Psoas muscle (tissue), 8 donors: ENCODE measurements at regions of chr13 and their contacts with region 1.

Region 1: GRCh38 chr13:48595431-48596429 is 58.0 kb upstream of the CYSLTR2 start:
- DNase-seq: peak in 1 of 2 donors; percentile 21
- ATAC-seq: peak in 2 of 4 donors; percentile 59 to 62
- H3K4me3 ChIP-seq: no peak overlapping the region
- H3K27ac ChIP-seq: no peak overlapping the region
- H3K4me1 ChIP-seq: no peaks in the 10 kb centered on the region
- H3K27me3 ChIP-seq: no peaks in the 10 kb centered on the region
- CTCF ChIP-seq: peak; percentile 37

Region 2: DNA sequence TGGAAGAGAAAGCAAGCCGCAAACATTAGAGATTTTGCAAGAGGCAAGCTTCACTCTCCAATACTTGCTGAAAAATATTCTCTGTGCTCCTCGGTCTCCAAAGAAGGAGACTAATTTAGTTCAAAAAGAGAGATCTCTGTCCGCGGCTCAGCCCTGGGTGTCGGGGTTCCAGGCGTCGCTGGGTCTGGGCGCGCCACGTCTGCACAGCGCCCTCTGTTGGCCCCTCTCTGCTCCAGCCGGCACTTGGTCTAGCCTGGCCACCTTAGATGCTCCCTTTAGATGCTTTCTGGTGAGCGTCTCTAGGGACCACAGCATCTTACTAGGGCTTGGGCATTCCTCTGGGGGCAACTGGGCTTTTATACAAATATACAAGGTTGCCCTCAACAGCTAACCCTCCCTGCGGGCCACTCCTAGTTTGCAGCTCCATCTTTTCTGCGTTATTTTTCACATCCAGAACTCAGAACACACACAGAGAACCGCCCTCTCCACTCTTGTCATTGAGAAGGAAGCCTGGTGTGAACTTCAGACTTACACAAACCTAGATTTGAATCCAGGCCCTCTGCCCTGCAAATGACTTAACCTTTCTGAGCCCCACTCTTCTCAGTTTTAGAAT is 136.3 kb after region 1 on chr13:
- intact Hi-C with region 1: loop called in 1 of 2 experiments (anchors 10 kb)
- DNase-seq: peak; percentile 37 to 68
- ATAC-seq: peak in 1 of 4 donors; percentile 48
- H3K4me3 ChIP-seq: no peak overlapping the region
- H3K27ac ChIP-seq: no peak overlapping the region
- H3K4me1 ChIP-seq: no peaks in the 10 kb centered on the region
- H3K27me3 ChIP-seq: no peaks in the 10 kb centered on the region
- CTCF ChIP-seq: peak; percentile 41

Region 3: GRCh38 chr13:48769107-48769704 is 173.5 kb after region 1 on chr13:
- intact Hi-C with region 1: loop called in 1 of 2 experiments (anchors 5 kb)
- DNase-seq: peak in 1 of 2 donors; percentile 31
- ATAC-seq: peak; percentile 93 to 100 (median 98)
- H3K4me3 ChIP-seq: no peak overlapping the region
- H3K27ac ChIP-seq: no peak overlapping the region
- H3K4me1 ChIP-seq: no peaks in the 10 kb centered on the region
- H3K27me3 ChIP-seq: peaks cover 0 to under 1% (median 0%) of the 10 kb centered on the region in 3 donors
- CTCF ChIP-seq: peak; percentile 96